ENCODE measurements at regions of chr1 and their contacts with region 1.

Region 1: DNA sequence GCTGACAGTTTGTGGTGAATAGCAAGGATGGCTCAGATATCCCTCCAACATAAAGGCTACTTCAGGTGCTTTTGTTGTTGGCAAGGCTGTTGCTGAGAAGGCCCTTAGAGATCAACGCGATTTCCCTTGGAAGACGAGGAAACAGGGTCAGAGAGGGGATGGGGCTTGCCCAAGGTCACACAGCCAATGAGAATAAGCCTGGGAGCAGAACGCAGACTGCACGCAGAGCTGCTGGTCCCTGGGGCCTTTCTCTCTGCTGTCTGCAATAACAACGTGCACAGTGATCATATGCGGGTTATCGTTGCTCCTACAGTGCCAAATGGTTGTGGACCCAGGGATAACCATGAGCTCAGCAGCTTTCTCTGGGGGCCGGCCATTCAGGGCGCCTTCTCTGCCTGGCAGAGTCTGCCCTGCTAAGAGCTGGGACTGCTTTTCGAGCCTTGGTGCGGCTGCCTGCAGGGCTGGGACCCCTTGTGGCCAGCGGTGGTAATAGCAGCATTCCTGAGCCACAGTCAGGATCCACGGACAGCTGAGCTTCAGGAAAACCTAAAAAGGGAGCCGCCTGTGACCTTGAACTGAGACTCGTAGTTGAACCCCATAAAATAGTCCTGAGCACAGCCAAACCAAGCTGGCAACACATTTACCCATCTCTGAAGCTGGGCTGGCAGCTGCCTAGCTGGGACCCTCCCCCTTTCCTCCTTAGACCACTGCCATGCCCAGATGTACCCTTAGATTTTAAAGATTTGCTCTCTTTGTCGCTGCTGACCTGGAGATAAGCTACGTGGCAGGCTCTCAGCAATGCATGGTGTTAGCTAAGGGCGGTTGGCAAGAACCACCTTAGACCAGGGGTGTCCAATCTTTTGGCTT is 39.8 kb downstream of the HTR6 start:
- DNase-seq: peak; percentile 47
- H3K4me3 ChIP-seq: no peak overlapping the region
- H3K27ac ChIP-seq: no peak overlapping the region
- H3K4me1 ChIP-seq: no peaks in the 10 kb centered on the region
- H3K27me3 ChIP-seq: no peaks in the 10 kb centered on the region
- CTCF ChIP-seq: peak; percentile 79 to 95

Region 2: DNA sequence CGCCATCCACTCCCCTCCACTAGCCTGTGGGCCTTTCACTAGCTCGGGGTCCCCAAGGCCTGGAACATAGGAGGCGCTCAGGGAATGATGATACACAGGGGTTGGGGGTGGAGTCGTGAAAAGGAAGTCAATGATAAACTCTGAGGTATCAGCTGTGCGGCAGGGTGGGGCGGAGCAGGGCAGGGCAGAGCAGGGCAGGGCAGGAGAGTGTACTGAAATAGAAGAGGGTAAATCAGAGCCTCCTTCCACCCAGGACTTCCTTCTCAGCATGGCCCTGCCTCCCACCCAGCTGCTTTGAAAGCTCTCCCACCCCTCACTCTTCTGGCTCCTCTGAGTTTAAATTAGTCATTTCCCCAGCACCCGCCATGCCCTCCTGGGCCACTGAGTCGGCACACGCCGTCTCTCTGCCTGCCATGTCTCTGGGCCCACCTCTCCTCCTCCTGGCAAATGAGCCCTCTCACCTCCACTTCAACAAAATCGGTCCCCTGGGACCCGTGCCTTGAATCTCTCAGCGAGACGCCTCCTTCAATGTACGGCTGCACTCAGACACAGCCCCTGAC is 236.0 kb before region 1 on chr1:
- CTCF ChIA-PET with region 1: no interaction called
- dilution Hi-C with region 1: no loop called
- in situ Hi-C with region 1: no loop called
- intact Hi-C with region 1: no loop called
- DNase-seq: no peak
- H3K4me3 ChIP-seq: no peak overlapping the region
- H3K27ac ChIP-seq: no peak overlapping the region
- H3K4me1 ChIP-seq: peaks cover 22% of the 10 kb centered on the region
- H3K27me3 ChIP-seq: no peaks in the 10 kb centered on the region
- CTCF ChIP-seq: no peak

Region 3: DNA sequence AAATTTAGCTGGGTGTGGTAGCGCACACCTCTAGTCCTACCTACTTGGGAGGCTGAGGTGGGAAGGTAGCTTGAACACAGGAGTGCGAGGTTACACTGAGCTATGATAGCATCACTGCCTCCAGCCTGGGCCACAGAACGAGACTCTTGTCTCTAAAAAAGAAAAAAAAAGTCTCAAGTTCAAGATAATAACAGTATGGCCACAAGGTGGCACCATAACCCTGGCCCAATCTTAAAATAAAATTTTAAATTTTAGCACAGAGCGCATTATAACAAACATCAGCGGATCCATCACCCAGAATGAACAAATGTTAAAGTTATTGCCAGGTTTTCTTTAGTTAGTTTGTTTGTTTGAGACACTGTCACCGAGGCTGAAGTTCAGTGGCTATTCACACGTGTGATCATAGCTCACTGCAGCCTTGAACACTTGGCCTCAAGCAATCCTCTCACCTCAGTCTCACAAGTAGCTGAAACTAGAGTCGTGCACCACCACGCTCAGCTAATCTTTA is 42.7 kb before region 1 on chr1:
- CTCF ChIA-PET with region 1: interaction called, 4 read pairs
- dilution Hi-C with region 1: loop called (anchors 5 kb)
- in situ Hi-C with region 1: no loop called
- intact Hi-C with region 1: loop called (anchors 1 kb)
- DNase-seq: no peak
- H3K4me3 ChIP-seq: no peak overlapping the region
- H3K27ac ChIP-seq: no peak overlapping the region
- H3K4me1 ChIP-seq: peaks cover 33% of the 10 kb centered on the region
- H3K27me3 ChIP-seq: peaks cover 19% of the 10 kb centered on the region
- CTCF ChIP-seq: peak; percentile 65 to 68